ENCODE measurements at regions of chr19 and their contacts with region 1.

Region 1: DNA sequence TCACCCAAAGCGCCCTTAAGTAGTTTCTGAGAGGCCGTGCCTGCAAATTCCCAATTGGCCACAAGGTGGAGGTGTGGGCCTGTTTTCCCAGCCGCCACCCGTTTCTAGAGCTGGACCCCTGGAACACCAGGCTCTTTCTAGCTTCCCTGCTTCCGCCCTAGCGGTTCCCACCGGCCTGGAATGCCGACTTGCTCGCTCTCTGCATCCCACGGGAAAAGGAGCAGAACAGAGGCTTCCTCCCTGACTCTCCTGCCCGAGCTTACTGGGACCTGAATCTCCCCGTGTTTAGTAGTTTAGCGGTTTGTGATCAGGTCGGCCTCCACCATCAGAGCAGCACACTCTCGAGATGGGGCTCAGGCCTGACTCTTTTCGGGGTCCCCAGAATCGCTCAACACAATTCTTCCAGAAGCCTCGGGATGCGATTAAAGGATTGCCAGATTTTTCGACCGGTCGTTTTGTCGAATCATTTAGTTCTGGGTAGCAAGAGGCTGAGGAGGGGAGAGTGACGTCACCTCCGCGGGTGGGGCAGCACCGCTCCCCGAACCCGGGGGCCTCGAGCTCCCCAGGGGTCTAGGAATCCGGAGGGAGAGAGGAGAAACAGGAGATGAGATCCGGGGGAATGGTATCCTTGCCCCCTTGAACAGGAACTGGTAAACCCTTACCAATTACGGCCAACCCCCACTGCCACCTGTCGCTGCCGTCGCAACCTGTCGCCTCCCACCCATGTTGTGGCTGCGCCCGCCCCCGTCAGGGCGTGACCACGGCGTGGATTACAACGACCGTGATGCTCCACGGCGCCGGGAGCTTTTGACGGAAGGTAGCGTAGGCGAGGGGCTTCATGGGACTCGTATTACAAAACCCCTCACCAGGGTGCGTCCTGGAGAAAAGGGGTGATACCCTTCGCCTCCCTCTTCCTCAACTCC is 8.0 kb downstream of the NAPSA start:
- DNase-seq: peak; percentile 73 to 94 (median 85)
- ATAC-seq: peak; percentile 84
- H3K4me3 ChIP-seq: peak overlapping the region; percentile 62
- H3K4me3 Mint-ChIP-seq: peak overlapping the region; percentile 94
- H3K27ac ChIP-seq: peak overlapping the region; percentile 94 to 96
- H3K27ac Mint-ChIP-seq: peak overlapping the region; percentile 98
- H3K4me1 ChIP-seq: peaks cover 34% of the 10 kb centered on the region
- H3K4me1 Mint-ChIP-seq: peaks cover 51% of the 10 kb centered on the region
- H3K27me3 ChIP-seq: no peaks in the 10 kb centered on the region
- H3K27me3 Mint-ChIP-seq: no peaks in the 10 kb centered on the region
- CTCF ChIP-seq: peak; percentile 92

Region 2: DNA sequence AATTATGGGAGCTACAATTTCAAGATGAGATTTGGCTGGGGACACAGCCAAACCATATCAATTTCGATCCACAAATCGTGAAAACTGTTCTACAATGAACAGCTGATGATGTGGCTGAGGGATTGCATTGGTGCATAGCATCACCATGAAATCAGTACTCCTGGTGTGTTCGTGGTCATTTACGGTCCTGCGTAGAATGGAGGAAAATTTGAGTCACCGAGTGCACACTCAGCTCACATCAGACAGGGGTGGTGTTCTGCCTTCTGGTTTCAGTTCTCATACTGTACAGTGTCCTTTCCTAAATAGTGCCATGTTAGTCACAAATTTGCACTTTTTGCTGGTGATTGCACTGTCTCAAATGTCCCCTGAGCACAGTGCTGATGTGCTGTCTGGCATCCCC is 114.9 kb before region 1 on chr19:
- CTCF ChIA-PET with region 1: no interaction called
- POLR2A ChIA-PET with region 1: no interaction called
- intact Hi-C with region 1: no loop called
- DNase-seq: no peak
- ATAC-seq: no peak
- H3K4me3 ChIP-seq: no peak overlapping the region
- H3K4me3 Mint-ChIP-seq: no peak overlapping the region
- H3K27ac ChIP-seq: no peak overlapping the region
- H3K27ac Mint-ChIP-seq: no peak overlapping the region
- H3K4me1 ChIP-seq: no peaks in the 10 kb centered on the region
- H3K4me1 Mint-ChIP-seq: no peaks in the 10 kb centered on the region
- H3K27me3 ChIP-seq: no peaks in the 10 kb centered on the region
- H3K27me3 Mint-ChIP-seq: peaks cover 22% of the 10 kb centered on the region
- CTCF ChIP-seq: no peak

Region 3: GRCh38 chr19:50266896-50267295 is 90.5 kb before region 1 on chr19:
- CTCF ChIA-PET with region 1: no interaction called
- POLR2A ChIA-PET with region 1: no interaction called
- intact Hi-C with region 1: no loop called
- DNase-seq: peak in 7 of 14 experiments; percentile 2 to 37 (median 11)
- ATAC-seq: peak; percentile 58
- H3K4me3 ChIP-seq: no peak overlapping the region
- H3K4me3 Mint-ChIP-seq: no peak overlapping the region
- H3K27ac ChIP-seq: no peak overlapping the region
- H3K27ac Mint-ChIP-seq: no peak overlapping the region
- H3K4me1 ChIP-seq: no peaks in the 10 kb centered on the region
- H3K4me1 Mint-ChIP-seq: no peaks in the 10 kb centered on the region
- H3K27me3 ChIP-seq: peaks cover 0 to 3% of the 10 kb centered on the region in 2 experiments
- H3K27me3 Mint-ChIP-seq: peaks cover 35% of the 10 kb centered on the region
- CTCF ChIP-seq: no peak

Region 4: GRCh38 chr19:50368649-50369570 is 11.5 kb after region 1 on chr19:
- CTCF ChIA-PET with region 1: interaction called, 28 read pairs
- POLR2A ChIA-PET with region 1: interaction called, 41 read pairs
- intact Hi-C with region 1: no loop called
- DNase-seq: peak; percentile 53 to 89 (median 73)
- ATAC-seq: peak; percentile 83
- H3K4me3 ChIP-seq: peak overlapping the region; percentile 72
- H3K4me3 Mint-ChIP-seq: peak overlapping the region; percentile 88
- H3K27ac ChIP-seq: peak overlapping the region in 1 of 2 donors; percentile 8
- H3K27ac Mint-ChIP-seq: peak overlapping the region; percentile 33
- H3K4me1 ChIP-seq: peaks cover 38% of the 10 kb centered on the region
- H3K4me1 Mint-ChIP-seq: peaks cover 39% of the 10 kb centered on the region
- H3K27me3 ChIP-seq: no peaks in the 10 kb centered on the region
- H3K27me3 Mint-ChIP-seq: no peaks in the 10 kb centered on the region
- CTCF ChIP-seq: peak; percentile 84

Region 5: GRCh38 chr19:50393589-50393988 is 36.1 kb after region 1 on chr19:
- CTCF ChIA-PET with region 1: no interaction called
- POLR2A ChIA-PET with region 1: no interaction called
- intact Hi-C with region 1: no loop called
- DNase-seq: no peak
- ATAC-seq: no peak
- H3K4me3 ChIP-seq: no peak overlapping the region
- H3K4me3 Mint-ChIP-seq: no peak overlapping the region
- H3K27ac ChIP-seq: no peak overlapping the region
- H3K27ac Mint-ChIP-seq: no peak overlapping the region
- H3K4me1 ChIP-seq: no peaks in the 10 kb centered on the region
- H3K4me1 Mint-ChIP-seq: no peaks in the 10 kb centered on the region
- H3K27me3 ChIP-seq: no peaks in the 10 kb centered on the region
- H3K27me3 Mint-ChIP-seq: no peaks in the 10 kb centered on the region
- CTCF ChIP-seq: no peak

Region 6: GRCh38 chr19:50414864-50415660 is 57.6 kb after region 1 on chr19:
- CTCF ChIA-PET with region 1: interaction called, 6 read pairs
- POLR2A ChIA-PET with region 1: interaction called, 6 read pairs
- intact Hi-C with region 1: loop called (anchors 1 kb)
- DNase-seq: peak; percentile 57 to 84 (median 69)
- ATAC-seq: peak; percentile 94
- H3K4me3 ChIP-seq: no peak overlapping the region
- H3K4me3 Mint-ChIP-seq: no peak overlapping the region
- H3K27ac ChIP-seq: no peak overlapping the region
- H3K27ac Mint-ChIP-seq: no peak overlapping the region
- H3K4me1 ChIP-seq: peaks cover 10% of the 10 kb centered on the region
- H3K4me1 Mint-ChIP-seq: peaks cover 2% of the 10 kb centered on the region
- H3K27me3 ChIP-seq: peaks cover 17 to 19% of the 10 kb centered on the region in 2 experiments
- H3K27me3 Mint-ChIP-seq: peaks cover 16% of the 10 kb centered on the region
- CTCF ChIP-seq: peak; percentile 62

Region 7: DNA sequence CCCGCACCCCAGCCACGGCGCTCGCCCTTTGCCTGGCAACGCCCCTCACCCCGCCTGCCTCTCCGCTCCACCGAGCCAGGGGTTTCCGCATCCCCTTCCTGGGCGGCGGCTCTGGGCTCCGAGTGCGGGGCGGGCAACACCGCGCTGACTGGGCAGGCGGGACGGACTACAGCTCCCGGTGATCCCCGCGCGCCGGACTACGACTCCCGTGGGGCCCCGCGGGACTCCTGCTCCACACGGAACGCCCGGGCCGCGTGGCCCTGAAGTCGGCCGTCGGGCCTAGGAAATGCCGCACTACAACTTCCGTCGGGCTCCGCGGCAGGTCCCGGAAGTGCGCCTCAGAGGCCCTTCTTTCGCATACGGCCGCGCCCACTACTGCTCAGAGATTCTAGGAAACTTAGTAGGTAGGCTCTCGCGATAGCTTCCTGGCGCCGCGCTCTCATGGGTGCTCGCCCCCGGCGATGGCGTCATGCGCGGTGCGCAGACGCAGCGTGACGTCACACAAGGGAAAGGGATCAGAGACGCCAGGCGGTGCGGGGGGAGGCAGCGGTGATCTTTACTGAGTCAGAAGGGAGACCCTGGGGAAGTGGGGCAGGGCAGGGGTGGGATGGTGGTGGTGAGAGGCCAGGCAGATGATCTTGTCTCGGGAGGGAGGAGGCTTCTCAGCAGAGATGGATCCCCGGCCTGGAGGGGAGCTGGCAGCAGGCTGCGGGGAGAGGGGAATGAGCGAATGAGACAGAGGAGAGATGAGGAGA is 153.8 kb after region 1 on chr19 and contains the start of gene JOSD2:
- CTCF ChIA-PET with region 1: interaction called, 5 read pairs
- POLR2A ChIA-PET with region 1: interaction called, 19 read pairs
- intact Hi-C with region 1: no loop called
- DNase-seq: peak; percentile 94 to 100 (median 96)
- ATAC-seq: peak; percentile 91
- H3K4me3 ChIP-seq: peak within 1 kb of the TSS; percentile 79
- H3K4me3 Mint-ChIP-seq: peak within 1 kb of the TSS; percentile 95
- H3K27ac ChIP-seq: peak within 1 kb of the TSS; percentile 63 to 91
- H3K27ac Mint-ChIP-seq: peak within 1 kb of the TSS; percentile 89
- H3K4me1 ChIP-seq: peaks cover 23% of the 10 kb centered on the region
- H3K4me1 Mint-ChIP-seq: peaks cover 15% of the 10 kb centered on the region
- H3K27me3 ChIP-seq: peaks cover 0 to 4% of the 10 kb centered on the region in 2 experiments
- H3K27me3 Mint-ChIP-seq: peaks cover 6% of the 10 kb centered on the region
- CTCF ChIP-seq: no peak
- total RNA-seq, gene JOSD2: 11.7 to 11.9 TPM

Region 8: DNA sequence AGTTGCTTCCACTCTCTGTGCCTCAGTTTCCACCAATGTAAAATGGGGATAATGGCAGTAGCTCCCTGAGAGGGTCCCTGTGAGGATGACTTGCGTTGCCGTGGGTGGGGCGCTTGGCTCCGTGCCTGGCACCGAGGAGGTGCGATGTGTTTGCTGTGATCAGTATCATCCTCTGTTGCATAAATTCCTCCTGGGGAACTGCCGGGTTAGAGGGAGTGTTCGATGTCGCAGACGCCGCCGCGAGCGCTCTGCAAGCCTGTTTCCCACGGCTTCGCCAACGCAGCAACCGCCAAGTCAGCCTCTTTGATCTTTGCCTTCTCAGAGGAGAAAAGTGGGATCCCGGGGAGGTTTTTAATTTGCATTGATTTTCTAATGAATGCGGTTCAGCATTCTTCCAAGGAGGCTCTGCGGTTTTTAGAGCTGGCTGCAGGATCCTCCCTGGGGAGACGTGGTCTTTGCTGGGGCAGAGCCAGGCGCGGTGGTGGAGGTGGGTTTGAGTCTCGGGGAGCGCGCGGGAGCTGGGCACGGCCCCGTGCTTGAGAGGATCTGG is 420.4 kb after region 1 on chr19:
- CTCF ChIA-PET with region 1: no interaction called
- POLR2A ChIA-PET with region 1: no interaction called
- intact Hi-C with region 1: loop called (anchors 1 kb)
- DNase-seq: no peak
- ATAC-seq: peak; percentile 44
- H3K4me3 ChIP-seq: no peak overlapping the region
- H3K4me3 Mint-ChIP-seq: no peak overlapping the region
- H3K27ac ChIP-seq: no peak overlapping the region
- H3K27ac Mint-ChIP-seq: no peak overlapping the region
- H3K4me1 ChIP-seq: peaks cover 6% of the 10 kb centered on the region
- H3K4me1 Mint-ChIP-seq: peaks cover 5% of the 10 kb centered on the region
- H3K27me3 ChIP-seq: peaks cover 50 to 72% of the 10 kb centered on the region in 2 experiments
- H3K27me3 Mint-ChIP-seq: peaks cover 87% of the 10 kb centered on the region
- CTCF ChIP-seq: no peak